ENCODE measurements at regions of chr2 and their contacts with region 1.

Region 1: GRCh38 chr2:219119422-219120043 is 41.1 kb downstream of the NHEJ1 start:
- DNase-seq: peak; percentile 61
- ATAC-seq: no peak
- H3K4me3 ChIP-seq: no peak overlapping the region
- H3K4me3 Mint-ChIP-seq: no peak overlapping the region
- H3K27ac ChIP-seq: no peak overlapping the region
- H3K27ac Mint-ChIP-seq: no peak overlapping the region
- H3K4me1 ChIP-seq: no peaks in the 10 kb centered on the region
- H3K4me1 Mint-ChIP-seq: peaks cover 2% of the 10 kb centered on the region
- H3K27me3 ChIP-seq: no peaks in the 10 kb centered on the region
- H3K27me3 Mint-ChIP-seq: no peaks in the 10 kb centered on the region
- CTCF ChIP-seq: peak; percentile 74

Region 2: DNA sequence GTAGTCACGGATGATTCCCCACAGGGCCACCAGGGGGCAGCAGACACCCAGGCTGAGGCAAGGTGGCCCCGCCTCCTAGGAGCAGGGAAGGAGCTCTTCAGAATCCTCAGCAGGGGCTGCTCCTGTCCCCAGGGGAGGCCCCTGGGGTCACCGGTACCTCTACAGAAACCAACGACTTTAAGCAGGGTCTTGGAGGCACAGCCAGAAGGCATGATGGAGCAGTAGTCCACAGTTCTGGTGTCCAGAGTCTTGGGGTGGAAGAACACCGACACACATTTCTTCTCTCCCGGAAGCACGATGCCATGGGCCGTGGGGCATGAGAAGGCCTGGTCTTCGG is 89.7 kb before region 1 on chr2:
- CTCF ChIA-PET with region 1: interaction called, 18 read pairs
- POLR2A ChIA-PET with region 1: no interaction called
- intact Hi-C with region 1: loop called (anchors 1 kb)
- DNase-seq: peak; percentile 79
- ATAC-seq: peak; percentile 89
- H3K4me3 ChIP-seq: no peak overlapping the region
- H3K4me3 Mint-ChIP-seq: no peak overlapping the region
- H3K27ac ChIP-seq: no peak overlapping the region
- H3K27ac Mint-ChIP-seq: no peak overlapping the region
- H3K4me1 ChIP-seq: no peaks in the 10 kb centered on the region
- H3K4me1 Mint-ChIP-seq: no peaks in the 10 kb centered on the region
- H3K27me3 ChIP-seq: peaks cover 0 to 18% (median 2%) of the 10 kb centered on the region in 4 experiments
- H3K27me3 Mint-ChIP-seq: peaks cover 44% of the 10 kb centered on the region
- CTCF ChIP-seq: peak; percentile 99

Region 3: GRCh38 chr2:219057709-219058540 is 61.6 kb before region 1 on chr2:
- CTCF ChIA-PET with region 1: interaction called, 75 read pairs
- POLR2A ChIA-PET with region 1: no interaction called
- intact Hi-C with region 1: loop called (anchors 1 kb)
- DNase-seq: peak; percentile 85
- ATAC-seq: peak; percentile 98
- H3K4me3 ChIP-seq: peak overlapping the region in 2 of 5 experiments; percentile 12 to 35
- H3K4me3 Mint-ChIP-seq: peak overlapping the region; percentile 74
- H3K27ac ChIP-seq: no peak overlapping the region
- H3K27ac Mint-ChIP-seq: peak overlapping the region; percentile 46
- H3K4me1 ChIP-seq: peaks cover 35 to 41% of the 10 kb centered on the region in 2 donors
- H3K4me1 Mint-ChIP-seq: peaks cover 24% of the 10 kb centered on the region
- H3K27me3 ChIP-seq: peaks cover 0 to 59% (median 45%) of the 10 kb centered on the region in 4 experiments
- H3K27me3 Mint-ChIP-seq: peaks cover 50% of the 10 kb centered on the region
- CTCF ChIP-seq: peak; percentile 91

Region 4: DNA sequence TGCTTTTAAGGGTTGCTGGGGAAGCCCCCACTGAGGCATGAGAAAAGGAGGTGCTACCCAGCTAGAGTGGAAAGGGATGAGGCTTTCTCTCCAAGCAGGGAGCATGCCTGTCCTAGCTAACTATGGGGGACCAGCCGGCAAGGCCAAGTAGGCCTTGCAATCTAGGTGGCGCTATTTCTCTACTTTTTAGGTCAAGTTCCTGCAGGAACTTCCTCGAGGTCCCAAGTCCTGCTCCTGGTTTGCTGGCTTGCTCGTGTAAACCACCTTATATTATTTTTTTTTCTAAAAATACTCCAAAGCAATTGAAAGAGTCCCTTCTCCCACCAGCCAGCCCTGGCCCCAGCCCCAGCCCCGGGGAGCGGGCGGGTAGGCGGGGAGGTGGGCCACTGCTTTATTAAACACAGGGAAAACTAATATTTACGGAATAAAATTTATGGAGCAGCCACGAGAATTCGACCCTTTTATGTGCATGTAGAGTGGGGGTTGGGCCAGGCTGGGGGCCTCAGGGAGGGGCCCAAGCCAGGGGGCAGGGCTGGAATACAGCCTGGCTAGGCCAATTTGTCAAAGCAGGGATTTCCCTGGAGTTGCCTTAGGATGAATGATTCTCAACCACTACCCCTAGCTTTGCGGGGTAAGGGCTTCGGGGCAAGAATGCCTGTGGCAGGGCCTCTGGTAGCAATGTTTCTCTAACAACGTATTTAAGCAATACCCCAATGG is 46.0 kb before region 1 on chr2:
- CTCF ChIA-PET with region 1: interaction called, 20 read pairs
- POLR2A ChIA-PET with region 1: no interaction called
- intact Hi-C with region 1: no loop called
- DNase-seq: peak; percentile 22
- ATAC-seq: no peak
- H3K4me3 ChIP-seq: no peak overlapping the region
- H3K4me3 Mint-ChIP-seq: no peak overlapping the region
- H3K27ac ChIP-seq: no peak overlapping the region
- H3K27ac Mint-ChIP-seq: no peak overlapping the region
- H3K4me1 ChIP-seq: no peaks in the 10 kb centered on the region
- H3K4me1 Mint-ChIP-seq: no peaks in the 10 kb centered on the region
- H3K27me3 ChIP-seq: no peaks in the 10 kb centered on the region
- H3K27me3 Mint-ChIP-seq: no peaks in the 10 kb centered on the region
- CTCF ChIP-seq: no peak

Region 5: GRCh38 chr2:219104107-219105035 is 15.2 kb before region 1 on chr2:
- CTCF ChIA-PET with region 1: interaction called, 16 read pairs
- POLR2A ChIA-PET with region 1: no interaction called
- intact Hi-C with region 1: no loop called
- DNase-seq: peak; percentile 20
- ATAC-seq: no peak
- H3K4me3 ChIP-seq: no peak overlapping the region
- H3K4me3 Mint-ChIP-seq: no peak overlapping the region
- H3K27ac ChIP-seq: no peak overlapping the region
- H3K27ac Mint-ChIP-seq: no peak overlapping the region
- H3K4me1 ChIP-seq: no peaks in the 10 kb centered on the region
- H3K4me1 Mint-ChIP-seq: no peaks in the 10 kb centered on the region
- H3K27me3 ChIP-seq: no peaks in the 10 kb centered on the region
- H3K27me3 Mint-ChIP-seq: no peaks in the 10 kb centered on the region
- CTCF ChIP-seq: peak; percentile 74

Measured in B cell (primary cell).